OCI-LY7 (cell line): ENCODE measurements at regions of chr11 and their contacts with region 1.

Region 1: GRCh38 chr11:79493555-79494171 is 52.8 kb upstream of the TENM4 start:
- DNase-seq: peak; percentile 52
- H3K4me3 ChIP-seq: no peak overlapping the region
- H3K27ac ChIP-seq: no peak overlapping the region
- H3K4me1 ChIP-seq: no peaks in the 10 kb centered on the region
- CTCF ChIP-seq: peak; percentile 87

Region 2: DNA sequence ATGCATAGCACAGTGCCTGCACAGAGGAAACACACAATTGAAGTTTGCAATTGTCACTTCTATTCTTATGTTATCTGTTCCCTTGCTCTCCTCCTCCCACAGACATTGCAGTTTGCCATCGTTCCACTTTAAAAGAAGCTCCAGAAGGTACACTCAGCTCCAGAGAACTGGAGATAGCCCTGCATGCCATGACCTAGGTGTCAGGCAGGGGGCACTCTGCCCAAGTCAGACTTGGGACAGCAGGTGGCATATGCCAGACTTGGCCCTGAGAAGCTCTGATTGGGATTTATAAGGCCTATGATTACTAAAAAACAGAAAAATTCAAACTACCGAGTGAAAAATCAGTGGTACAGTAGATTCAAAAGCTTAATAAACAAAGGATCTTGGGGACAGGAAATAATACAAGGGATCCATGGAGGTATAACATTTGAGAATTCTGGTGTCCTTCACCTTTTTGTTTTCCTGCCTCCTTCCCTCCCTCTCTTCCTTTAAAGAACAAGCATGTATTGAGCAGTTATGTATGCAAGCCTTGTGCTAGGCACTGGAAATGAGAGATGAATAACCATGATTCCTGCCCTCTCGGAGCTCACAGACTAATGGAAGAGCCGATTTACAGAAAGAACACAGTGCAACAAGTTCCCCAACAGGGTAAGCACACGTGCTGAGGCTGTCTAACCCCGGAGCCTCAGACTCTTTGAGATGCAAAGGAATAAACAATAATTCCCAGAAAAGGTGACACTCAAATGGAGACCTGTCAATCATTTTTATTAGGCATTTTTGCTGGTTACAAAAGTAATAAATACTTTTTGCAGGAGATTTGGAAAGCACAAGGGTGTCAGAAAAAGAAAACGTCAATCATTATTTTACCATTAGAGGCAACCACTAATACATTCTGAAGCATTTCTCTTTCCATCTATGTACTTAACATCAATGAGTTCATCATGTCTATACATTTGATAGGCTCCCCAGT is 92.7 kb before region 1 on chr11:
- CTCF ChIA-PET with region 1: no interaction called
- POLR2A ChIA-PET with region 1: no interaction called
- intact Hi-C with region 1: loop called (anchors 1 kb)
- DNase-seq: peak; percentile 36
- H3K4me3 ChIP-seq: no peak overlapping the region
- H3K27ac ChIP-seq: no peak overlapping the region
- H3K4me1 ChIP-seq: no peaks in the 10 kb centered on the region
- CTCF ChIP-seq: peak; percentile 76

Region 3: GRCh38 chr11:79428406-79428805 is 65.3 kb before region 1 on chr11:
- CTCF ChIA-PET with region 1: no interaction called
- POLR2A ChIA-PET with region 1: no interaction called
- intact Hi-C with region 1: no loop called
- DNase-seq: no peak
- H3K4me3 ChIP-seq: no peak overlapping the region
- H3K27ac ChIP-seq: no peak overlapping the region
- H3K4me1 ChIP-seq: no peaks in the 10 kb centered on the region
- CTCF ChIP-seq: no peak

Region 4: DNA sequence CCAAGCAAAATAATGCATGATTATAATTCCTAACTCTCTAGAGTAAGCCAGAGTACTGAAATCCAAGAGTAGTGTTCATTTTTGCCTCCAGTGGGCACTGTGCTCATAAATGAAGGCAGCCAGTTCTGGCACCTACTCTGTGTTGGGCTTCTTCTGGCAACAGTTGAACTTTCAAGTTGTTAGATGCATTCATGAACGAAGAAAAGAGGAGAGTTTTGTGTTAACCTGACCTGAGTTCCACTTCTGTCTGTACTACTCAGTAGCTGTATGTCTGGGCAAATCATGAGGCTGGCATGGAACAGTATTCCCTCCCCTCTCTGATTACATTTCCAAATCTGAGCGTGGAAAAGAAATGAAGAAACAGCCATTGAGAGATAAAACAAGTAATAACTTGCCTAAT is 32.5 kb before region 1 on chr11:
- CTCF ChIA-PET with region 1: no interaction called
- POLR2A ChIA-PET with region 1: no interaction called
- intact Hi-C with region 1: loop called (anchors 1 kb)
- DNase-seq: no peak
- H3K4me3 ChIP-seq: no peak overlapping the region
- H3K27ac ChIP-seq: no peak overlapping the region
- H3K4me1 ChIP-seq: no peaks in the 10 kb centered on the region
- CTCF ChIP-seq: peak; percentile 66

Region 5: DNA sequence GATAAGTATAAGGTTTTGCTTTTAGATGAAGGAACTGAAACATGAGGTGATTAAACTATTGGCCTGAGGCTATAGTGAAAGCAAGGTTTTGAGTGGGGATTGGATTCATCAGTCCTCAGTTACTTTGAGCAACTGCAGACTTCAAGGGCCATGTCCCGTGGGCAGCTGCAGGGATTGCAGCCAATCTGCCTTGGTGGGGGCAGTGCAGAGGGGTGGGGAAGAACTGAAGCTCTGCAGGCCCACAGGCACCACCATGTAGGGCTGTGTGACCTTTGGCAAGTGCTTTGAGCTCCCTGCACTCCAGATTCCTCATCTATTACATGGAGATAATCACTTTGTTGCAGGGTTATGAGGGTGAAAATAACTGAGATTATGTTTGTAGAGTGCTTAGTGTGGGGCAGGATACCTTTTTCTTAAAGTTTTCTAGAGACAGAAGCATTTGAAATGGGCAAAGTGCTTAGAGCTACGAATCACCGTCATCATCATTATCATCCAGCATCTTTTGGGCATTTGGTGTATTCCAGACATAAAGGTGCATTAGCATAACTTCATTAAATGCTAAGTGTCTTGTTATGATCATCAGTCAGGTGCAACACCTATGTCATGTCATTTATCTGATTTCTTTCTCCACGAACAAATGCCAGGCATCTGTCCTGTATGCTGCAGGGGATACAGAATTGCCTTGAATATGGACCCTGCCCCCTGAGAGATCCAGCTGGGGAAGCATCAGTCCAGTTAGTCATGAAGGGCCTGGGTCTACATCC is 19.2 kb after region 1 on chr11:
- CTCF ChIA-PET with region 1: no interaction called
- POLR2A ChIA-PET with region 1: no interaction called
- intact Hi-C with region 1: no loop called
- DNase-seq: no peak
- H3K4me3 ChIP-seq: no peak overlapping the region
- H3K27ac ChIP-seq: no peak overlapping the region
- H3K4me1 ChIP-seq: no peaks in the 10 kb centered on the region
- CTCF ChIP-seq: no peak

Region 6: DNA sequence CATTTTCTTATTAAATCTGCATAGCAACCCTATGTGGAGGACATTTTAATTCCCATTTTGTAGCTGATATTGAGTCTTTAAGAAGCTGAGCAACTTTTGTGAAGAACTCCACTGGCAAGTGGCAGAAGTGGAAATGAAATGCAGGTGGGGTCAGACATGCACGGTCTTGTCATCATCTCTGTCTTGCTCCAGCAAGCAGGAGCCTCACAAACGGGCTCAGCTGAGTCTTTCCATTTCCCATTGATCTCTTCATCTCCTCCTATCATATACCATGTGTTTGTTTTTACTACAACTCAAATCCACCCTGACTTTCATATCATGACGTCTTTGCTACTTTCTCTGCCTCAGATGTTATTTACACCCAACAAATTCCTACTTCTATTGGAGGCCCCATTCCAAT is 45.1 kb after region 1 on chr11:
- CTCF ChIA-PET with region 1: no interaction called
- POLR2A ChIA-PET with region 1: no interaction called
- intact Hi-C with region 1: no loop called
- DNase-seq: no peak
- H3K4me3 ChIP-seq: no peak overlapping the region
- H3K27ac ChIP-seq: no peak overlapping the region
- H3K4me1 ChIP-seq: no peaks in the 10 kb centered on the region
- CTCF ChIP-seq: no peak